CD4-positive, alpha-beta memory T cell (primary cell): ENCODE measurements at regions of chr17 and their contacts with region 1.

Region 1: DNA sequence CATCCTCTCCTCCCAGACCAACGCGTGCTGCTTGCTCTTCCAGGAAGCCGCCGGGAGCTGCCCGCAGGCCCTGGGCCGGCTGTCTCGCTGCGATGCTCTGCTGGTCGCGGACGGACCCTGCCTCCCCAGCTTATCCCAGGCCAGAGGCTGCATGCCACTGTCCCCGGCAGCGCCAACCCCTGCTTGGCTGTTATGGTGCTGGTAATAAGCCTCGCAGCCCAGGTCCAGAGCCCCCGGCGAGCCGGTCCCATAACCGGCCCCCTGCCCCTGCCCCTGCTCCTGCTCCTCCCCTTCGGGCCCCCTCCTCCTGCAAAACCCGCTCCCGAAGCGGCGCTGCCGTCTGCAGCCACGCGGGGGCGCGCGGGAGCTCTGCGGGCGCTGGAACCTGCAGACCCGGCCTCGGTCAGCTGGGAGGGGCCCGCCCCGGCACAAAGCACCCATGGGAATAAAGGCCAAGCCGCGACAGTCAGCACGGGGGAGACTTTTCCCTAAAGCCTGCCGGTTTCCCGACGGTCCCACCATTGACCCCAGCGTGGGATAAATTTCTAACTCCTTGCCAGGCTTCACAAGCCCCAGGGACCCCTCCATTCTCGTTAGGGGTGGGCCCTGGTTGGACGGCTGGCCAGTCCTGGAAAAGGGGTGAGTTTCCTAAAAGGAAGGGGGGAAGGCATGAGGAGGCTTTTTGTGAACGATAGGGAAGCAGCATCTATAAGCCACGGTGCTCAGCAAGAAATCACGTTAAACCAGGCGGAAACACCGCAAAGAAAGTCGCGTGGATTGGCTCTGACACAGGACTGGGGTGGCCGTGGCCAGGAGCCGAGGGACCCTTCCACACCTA is 11.2 kb downstream of the ENPP7 start:
- DNase-seq: peak in 4 of 5 donors; percentile 65 to 76 (median 67)
- H3K4me3 ChIP-seq: no peak overlapping the region
- H3K4me3 Mint-ChIP-seq: peak overlapping the region in 1 of 8 donors; percentile 26
- H3K27ac ChIP-seq: no peak overlapping the region
- H3K27ac Mint-ChIP-seq: peak overlapping the region in 1 of 7 donors; percentile 13
- H3K4me1 ChIP-seq: peaks cover 16% of the 10 kb centered on the region
- H3K4me1 Mint-ChIP-seq: peaks cover 4 to 19% (median 9%) of the 10 kb centered on the region in 4 donors
- H3K27me3 ChIP-seq: peaks cover 13% of the 10 kb centered on the region
- H3K27me3 Mint-ChIP-seq: peaks cover 24 to 33% of the 10 kb centered on the region in 2 donors

Region 2: DNA sequence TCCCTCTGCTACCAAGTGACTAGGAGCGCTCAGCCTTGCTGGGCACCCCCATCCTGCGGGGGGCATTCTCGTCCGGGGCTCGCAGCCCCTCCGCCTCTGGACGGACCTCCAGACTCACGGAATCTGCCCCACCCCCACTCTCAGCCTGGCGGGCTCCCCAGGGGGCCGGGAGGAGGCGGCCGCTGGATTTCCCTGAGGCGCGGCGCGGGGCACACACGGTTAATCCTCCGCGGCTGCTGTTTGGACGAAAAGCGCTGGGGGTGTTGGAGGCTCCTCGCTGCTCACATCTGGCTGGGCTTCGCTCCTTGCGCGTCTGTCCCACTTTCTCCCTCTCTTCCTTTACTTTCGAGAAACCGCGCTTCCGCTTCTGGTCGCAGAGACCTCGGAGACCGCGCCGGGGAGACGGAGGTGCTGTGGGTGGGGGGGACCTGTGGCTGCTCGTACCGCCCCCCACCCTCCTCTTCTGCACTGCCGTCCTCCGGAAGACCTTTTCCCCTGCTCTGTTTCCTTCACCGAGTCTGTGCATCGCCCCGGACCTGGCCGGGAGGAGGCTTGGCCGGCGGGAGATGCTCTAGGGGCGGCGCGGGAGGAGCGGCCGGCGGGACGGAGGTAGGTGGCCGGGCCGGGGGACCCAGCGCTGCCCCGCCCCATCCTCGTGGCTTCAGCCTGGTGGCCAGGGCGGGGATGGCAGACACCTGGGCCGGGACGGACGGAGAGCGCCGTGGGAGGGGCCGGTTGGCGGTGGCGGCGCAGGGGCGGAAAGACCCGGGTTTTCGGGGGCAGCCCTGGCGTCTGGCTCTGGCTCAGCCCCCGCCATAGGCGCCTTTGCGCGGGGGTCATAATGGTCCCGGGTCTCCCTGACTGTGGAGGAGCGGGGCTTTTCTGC is 717.8 kb before region 1 on chr17 and contains the start of gene C1QTNF1:
- CTCF ChIA-PET with region 1: no interaction called
- POLR2A ChIA-PET with region 1: no interaction called
- intact Hi-C with region 1: no loop called
- DNase-seq: peak in 4 of 5 donors; percentile 21 to 30 (median 28)
- H3K4me3 ChIP-seq: peak within 1 kb of the TSS in 1 of 2 donors; percentile 45
- H3K4me3 Mint-ChIP-seq: peak within 1 kb of the TSS; percentile 85 to 92 (median 88)
- H3K27ac ChIP-seq: no peak within 1 kb of the TSS
- H3K27ac Mint-ChIP-seq: peak within 1 kb of the TSS in 4 of 7 donors; percentile 21 to 87 (median 51)
- H3K4me1 ChIP-seq: peaks cover 13% of the 10 kb centered on the region
- H3K4me1 Mint-ChIP-seq: peaks cover 2 to 21% (median 4%) of the 10 kb centered on the region in 4 donors
- H3K27me3 ChIP-seq: peaks cover 16% of the 10 kb centered on the region
- H3K27me3 Mint-ChIP-seq: peaks cover 12 to 25% of the 10 kb centered on the region in 2 donors
- total RNA-seq, gene C1QTNF1: not detected

Region 3: GRCh38 chr17:79728226-79728907 is 13.6 kb before region 1 on chr17:
- CTCF ChIA-PET with region 1: interaction called, 12 read pairs
- POLR2A ChIA-PET with region 1: interaction called, 3 read pairs
- intact Hi-C with region 1: no loop called
- DNase-seq: peak; percentile 86 to 90 (median 87)
- H3K4me3 ChIP-seq: no peak overlapping the region
- H3K4me3 Mint-ChIP-seq: peak overlapping the region in 7 of 8 donors; percentile 54 to 82 (median 74)
- H3K27ac ChIP-seq: no peak overlapping the region
- H3K27ac Mint-ChIP-seq: peak overlapping the region; percentile 68 to 94 (median 86)
- H3K4me1 ChIP-seq: peaks cover 16% of the 10 kb centered on the region
- H3K4me1 Mint-ChIP-seq: peaks cover 6 to 35% (median 22%) of the 10 kb centered on the region in 4 donors
- H3K27me3 ChIP-seq: no peaks in the 10 kb centered on the region
- H3K27me3 Mint-ChIP-seq: no peaks in the 10 kb centered on the region

Region 4: DNA sequence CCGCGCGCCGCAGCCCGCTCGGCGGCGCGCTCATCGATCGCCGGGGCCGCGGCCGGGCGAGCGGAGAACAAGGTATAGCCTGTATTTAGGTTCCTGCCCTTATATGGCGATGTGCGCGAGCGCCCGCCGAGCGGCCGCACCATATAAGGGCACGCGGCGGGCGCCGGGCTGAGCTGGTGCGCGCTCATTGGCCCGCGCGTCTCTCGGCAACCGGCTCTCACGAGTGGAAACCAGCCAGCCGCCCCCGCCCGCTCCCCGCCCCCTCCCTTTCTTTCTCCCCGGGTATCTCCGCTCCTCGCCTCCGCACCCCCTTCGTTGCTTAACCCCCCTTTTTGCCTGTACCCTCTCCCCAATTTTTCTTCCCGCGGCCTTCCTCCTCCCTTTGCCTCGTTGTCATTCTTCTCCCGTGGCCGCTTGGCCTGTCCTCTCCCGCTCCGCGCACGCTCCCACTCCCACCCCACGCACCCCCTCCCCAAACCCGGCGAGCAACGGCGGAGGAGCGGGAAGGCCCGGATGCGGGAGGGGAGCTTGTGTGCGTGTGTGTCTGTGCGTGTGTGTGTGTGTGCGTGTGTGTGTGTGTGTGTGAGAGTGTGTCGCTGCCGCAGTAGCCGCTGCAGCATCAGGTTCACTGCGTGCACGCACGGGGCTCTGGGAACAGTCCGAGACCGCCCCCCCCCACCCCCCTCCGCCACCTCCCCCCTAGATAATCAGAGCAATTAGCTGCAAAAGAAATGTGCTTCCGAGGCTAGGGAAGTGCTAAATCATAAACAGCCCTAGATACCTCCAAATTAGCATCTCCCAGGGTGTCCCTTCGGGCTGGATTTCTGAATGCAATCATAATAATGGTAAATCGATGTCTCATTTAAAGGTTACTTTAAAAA is 68.4 kb after region 1 on chr17:
- CTCF ChIA-PET with region 1: interaction called, 5 read pairs
- POLR2A ChIA-PET with region 1: interaction called, 3 read pairs
- intact Hi-C with region 1: loop called (anchors 10 kb)
- DNase-seq: peak; percentile 68 to 84 (median 75)
- H3K4me3 ChIP-seq: peak overlapping the region in 1 of 2 donors; percentile 35
- H3K4me3 Mint-ChIP-seq: peak overlapping the region in 6 of 8 donors; percentile 27 to 77 (median 51)
- H3K27ac ChIP-seq: no peak overlapping the region
- H3K27ac Mint-ChIP-seq: peak overlapping the region in 4 of 7 donors; percentile 51 to 88 (median 78)
- H3K4me1 ChIP-seq: peaks cover 47% of the 10 kb centered on the region
- H3K4me1 Mint-ChIP-seq: peaks cover 14 to 44% (median 25%) of the 10 kb centered on the region in 4 donors
- H3K27me3 ChIP-seq: peaks cover 69% of the 10 kb centered on the region
- H3K27me3 Mint-ChIP-seq: peaks cover 50 to 56% of the 10 kb centered on the region in 2 donors